ENCODE measurements at regions of chr10 and their contacts with region 1.

Region 1: DNA sequence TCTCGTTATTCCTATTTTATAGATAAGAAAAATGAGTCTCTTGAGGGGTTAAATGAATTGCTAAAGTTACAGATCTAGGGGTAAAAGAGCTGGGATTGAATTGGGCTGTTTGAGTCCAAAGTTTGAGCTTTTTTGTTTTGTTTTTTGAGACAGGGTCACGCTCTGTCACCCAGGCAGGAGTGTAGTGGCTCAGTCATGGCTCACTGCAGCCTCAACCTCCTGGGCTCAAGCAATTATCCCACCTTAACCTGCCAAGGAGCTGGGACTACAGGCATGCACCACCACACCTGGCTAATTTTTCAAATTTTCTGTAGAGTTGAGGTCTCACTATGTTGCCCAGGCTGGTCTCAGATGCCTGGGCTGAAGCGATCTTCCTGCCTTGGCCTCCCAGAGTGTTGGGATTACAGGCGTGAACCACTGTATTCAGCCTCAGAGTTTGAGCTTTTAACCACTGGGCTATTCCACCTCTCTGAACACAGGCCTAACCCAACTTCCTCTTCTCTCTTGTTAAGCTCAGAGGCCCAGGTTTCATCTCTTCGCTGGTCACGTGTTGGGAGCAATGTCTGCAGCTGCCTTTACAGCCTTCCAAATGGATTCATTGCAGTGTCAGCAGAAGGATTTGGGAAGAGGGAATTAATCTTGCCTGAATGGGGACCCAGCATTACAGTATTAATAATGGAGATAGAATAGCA is 8.0 kb downstream of the SUFU start:
- DNase-seq: no peak
- ATAC-seq: no peak
- H3K4me3 ChIP-seq: no peak overlapping the region
- H3K27ac ChIP-seq: no peak overlapping the region
- H3K4me1 ChIP-seq: peaks cover 3% of the 10 kb centered on the region
- H3K27me3 ChIP-seq: no peaks in the 10 kb centered on the region

Region 2: DNA sequence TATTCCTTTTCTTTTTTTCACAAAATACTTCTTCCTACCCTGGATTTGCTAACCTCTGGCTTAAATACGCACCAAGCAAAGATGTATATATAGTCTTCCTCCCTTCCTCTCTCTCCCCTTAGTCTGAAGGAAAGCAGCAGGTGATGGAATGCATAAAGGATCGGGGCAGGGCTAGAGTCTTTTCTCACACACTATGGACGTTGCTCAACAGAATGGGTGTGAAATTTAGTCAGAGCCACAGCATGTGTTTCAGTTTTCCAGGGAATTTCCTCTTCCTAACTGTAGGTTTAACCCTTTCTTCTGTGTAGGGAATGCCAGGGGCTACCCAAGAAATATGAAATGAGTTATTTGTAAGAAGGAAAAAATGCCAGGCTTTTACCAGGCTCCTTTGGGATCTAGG is 187.7 kb before region 1 on chr10:
- intact Hi-C with region 1: no loop called
- DNase-seq: no peak
- ATAC-seq: no peak
- H3K4me3 ChIP-seq: no peak overlapping the region
- H3K27ac ChIP-seq: no peak overlapping the region
- H3K4me1 ChIP-seq: no peaks in the 10 kb centered on the region
- H3K27me3 ChIP-seq: no peaks in the 10 kb centered on the region

Region 3: GRCh38 chr10:102565793-102566192 is 54.1 kb after region 1 on chr10:
- intact Hi-C with region 1: loop called in 1 of 4 experiments (anchors 10 kb)
- DNase-seq: no peak
- ATAC-seq: no peak
- H3K4me3 ChIP-seq: no peak overlapping the region
- H3K27ac ChIP-seq: no peak overlapping the region
- H3K4me1 ChIP-seq: peaks cover 2% of the 10 kb centered on the region
- H3K27me3 ChIP-seq: no peaks in the 10 kb centered on the region

Region 4: GRCh38 chr10:102796407-102797176 is 284.9 kb after region 1 on chr10:
- intact Hi-C with region 1: no loop called
- DNase-seq: peak; percentile 90 to 95 (median 94)
- ATAC-seq: peak; percentile 93 to 97
- H3K4me3 ChIP-seq: no peak overlapping the region
- H3K27ac ChIP-seq: peak overlapping the region; percentile 92
- H3K4me1 ChIP-seq: peaks cover 35% of the 10 kb centered on the region
- H3K27me3 ChIP-seq: no peaks in the 10 kb centered on the region

Region 5: GRCh38 chr10:102815790-102816549 is 304.2 kb after region 1 on chr10:
- intact Hi-C with region 1: no loop called
- DNase-seq: peak; percentile 56 to 76 (median 74)
- ATAC-seq: peak; percentile 74 to 77
- H3K4me3 ChIP-seq: no peak overlapping the region
- H3K27ac ChIP-seq: peak overlapping the region; percentile 100
- H3K4me1 ChIP-seq: peaks cover 26% of the 10 kb centered on the region
- H3K27me3 ChIP-seq: no peaks in the 10 kb centered on the region

Region 6: GRCh38 chr10:103333925-103334520 is 822.3 kb after region 1 on chr10:
- intact Hi-C with region 1: no loop called
- DNase-seq: no peak
- ATAC-seq: no peak
- H3K4me3 ChIP-seq: no peak overlapping the region
- H3K27ac ChIP-seq: no peak overlapping the region
- H3K4me1 ChIP-seq: no peaks in the 10 kb centered on the region
- H3K27me3 ChIP-seq: no peaks in the 10 kb centered on the region